Gastrocnemius medialis (tissue), 4 donors: ENCODE measurements at regions of chr22 and their contacts with region 1.

Region 1: DNA sequence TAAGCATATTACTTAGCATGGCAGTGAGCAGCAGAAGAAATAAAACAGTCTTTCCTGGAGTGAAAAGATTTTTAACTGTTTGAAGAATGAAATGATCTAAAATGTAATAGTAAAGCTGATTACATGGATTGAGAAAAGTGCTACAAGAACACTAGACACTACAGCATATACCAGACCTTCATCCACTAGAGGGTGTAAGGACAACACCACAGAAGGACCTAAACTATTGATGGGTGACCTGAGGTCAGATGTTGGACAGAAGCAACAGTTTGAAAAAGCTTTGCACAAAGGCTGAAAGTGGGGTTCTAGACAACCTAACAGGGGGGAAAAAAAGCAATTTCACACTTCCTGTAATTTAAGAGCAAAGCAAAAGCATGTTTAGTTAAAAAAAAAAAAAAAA is 97.7 kb downstream of the RBFOX2 start:
- DNase-seq: no peak
- ATAC-seq: peak; percentile 94 to 95
- H3K4me3 ChIP-seq: no peak overlapping the region
- H3K27ac ChIP-seq: no peak overlapping the region
- H3K4me1 ChIP-seq: no peaks in the 10 kb centered on the region
- H3K27me3 ChIP-seq: no peaks in the 10 kb centered on the region
- CTCF ChIP-seq: peak; percentile 45 to 72 (median 66)
- POLR2A ChIP-seq: no peak

Region 2: GRCh38 chr22:35638410-35638809 is 292.5 kb before region 1 on chr22:
- in situ Hi-C with region 1: loop called in 1 of 4 experiments (anchors 5 kb)
- intact Hi-C with region 1: no loop called
- DNase-seq: peak; percentile 57 to 86
- ATAC-seq: peak; percentile 91 to 93
- H3K4me3 ChIP-seq: peak overlapping the region in 1 of 4 donors; percentile 10
- H3K27ac ChIP-seq: peak overlapping the region; percentile 50 to 79 (median 73)
- H3K4me1 ChIP-seq: peaks cover 18 to 19% of the 10 kb centered on the region in 2 donors
- H3K27me3 ChIP-seq: no peaks in the 10 kb centered on the region
- CTCF ChIP-seq: no peak
- POLR2A ChIP-seq: no peak

Region 3: GRCh38 chr22:36065775-36066559 is 135.0 kb after region 1 on chr22:
- in situ Hi-C with region 1: loop called (anchors 5 to 10 kb)
- intact Hi-C with region 1: loop called (anchors 2 kb)
- DNase-seq: peak; percentile 61 to 85
- ATAC-seq: peak; percentile 89 to 93
- H3K4me3 ChIP-seq: peak overlapping the region; percentile 60 to 71 (median 63)
- H3K27ac ChIP-seq: peak overlapping the region; percentile 76 to 82 (median 79)
- H3K4me1 ChIP-seq: peaks cover 0 to 5% of the 10 kb centered on the region in 2 donors
- H3K27me3 ChIP-seq: no peaks in the 10 kb centered on the region
- CTCF ChIP-seq: peak; percentile 99 to 100 (median 100)
- POLR2A ChIP-seq: no peak

Region 4: DNA sequence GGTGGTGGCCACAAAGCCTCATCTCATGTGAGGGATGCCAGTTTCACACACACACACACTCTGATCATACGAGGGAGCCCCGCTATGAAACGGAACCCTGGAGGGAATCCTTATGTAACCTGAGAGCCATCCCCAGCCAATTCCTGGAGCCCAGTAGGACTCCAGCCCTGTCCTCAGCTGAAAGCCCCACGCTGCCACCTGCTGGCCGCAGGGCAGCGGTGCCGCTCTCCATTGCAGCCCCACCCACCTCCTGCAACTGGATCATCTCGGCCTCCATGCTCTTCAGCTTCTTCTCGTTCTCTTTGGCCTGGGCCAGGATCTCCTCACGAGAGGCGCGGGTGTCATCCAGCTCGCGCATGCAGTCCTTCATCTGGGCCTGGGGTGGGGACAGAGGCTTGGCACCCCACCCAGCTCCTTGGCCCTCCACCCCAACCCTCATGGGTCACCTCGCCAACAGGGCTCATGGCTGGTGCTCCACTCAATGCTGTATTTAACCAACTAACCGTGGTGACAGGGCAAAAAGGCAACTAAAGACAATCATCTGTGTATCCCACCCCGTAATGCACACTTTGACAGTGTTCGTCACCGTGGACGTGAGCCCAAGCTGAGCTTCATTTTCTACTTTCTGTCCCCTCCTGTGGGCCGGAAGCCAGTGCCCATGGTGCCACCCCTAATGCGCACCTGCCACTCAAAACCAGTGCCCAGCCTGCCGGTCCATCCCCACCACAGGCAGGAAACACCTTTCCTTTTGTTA is 355.7 kb after region 1 on chr22:
- in situ Hi-C with region 1: no loop called
- intact Hi-C with region 1: loop called (anchors 10 kb)
- DNase-seq: peak; percentile 47 to 82
- ATAC-seq: peak; percentile 85 to 95
- H3K4me3 ChIP-seq: no peak overlapping the region
- H3K27ac ChIP-seq: peak overlapping the region; percentile 4 to 61 (median 46)
- H3K4me1 ChIP-seq: peaks cover 10 to 11% of the 10 kb centered on the region in 2 donors
- H3K27me3 ChIP-seq: no peaks in the 10 kb centered on the region
- CTCF ChIP-seq: peak; percentile 88 to 97 (median 92)
- POLR2A ChIP-seq: no peak